ENCODE measurements at regions of chr7 and their contacts with region 1.

Region 1: DNA sequence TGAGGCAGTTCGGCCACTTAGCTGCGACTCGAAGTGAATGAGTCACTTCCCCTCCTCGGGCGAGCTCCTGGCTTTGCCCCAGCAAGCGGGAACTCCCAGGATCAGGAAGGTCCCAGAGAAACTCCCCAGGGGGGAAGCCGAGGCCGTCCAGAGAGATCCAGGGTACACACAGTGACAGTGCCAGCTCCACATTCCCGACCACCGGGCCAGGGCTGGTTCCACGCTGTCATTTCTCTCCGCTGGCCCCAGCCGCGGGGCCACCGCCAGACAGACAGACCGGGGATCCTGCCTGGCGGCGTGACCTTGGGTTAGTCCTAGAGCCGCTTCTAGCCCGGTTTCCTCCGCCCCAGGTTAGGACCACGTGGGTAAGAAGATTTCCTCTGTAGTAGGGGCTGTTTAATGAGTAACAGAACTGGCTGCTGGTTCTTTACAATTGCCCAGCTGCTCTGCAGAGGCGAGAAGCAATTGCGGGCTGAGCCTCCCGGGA is 463 bp upstream of the UPP1 start:
- DNase-seq: no peak
- ATAC-seq: peak; percentile 73
- H3K4me3 Mint-ChIP-seq: peak overlapping the region; percentile 81
- H3K27ac Mint-ChIP-seq: peak overlapping the region; percentile 96
- H3K4me1 Mint-ChIP-seq: peaks cover 67% of the 10 kb centered on the region
- H3K27me3 Mint-ChIP-seq: no peaks in the 10 kb centered on the region

Region 2: DNA sequence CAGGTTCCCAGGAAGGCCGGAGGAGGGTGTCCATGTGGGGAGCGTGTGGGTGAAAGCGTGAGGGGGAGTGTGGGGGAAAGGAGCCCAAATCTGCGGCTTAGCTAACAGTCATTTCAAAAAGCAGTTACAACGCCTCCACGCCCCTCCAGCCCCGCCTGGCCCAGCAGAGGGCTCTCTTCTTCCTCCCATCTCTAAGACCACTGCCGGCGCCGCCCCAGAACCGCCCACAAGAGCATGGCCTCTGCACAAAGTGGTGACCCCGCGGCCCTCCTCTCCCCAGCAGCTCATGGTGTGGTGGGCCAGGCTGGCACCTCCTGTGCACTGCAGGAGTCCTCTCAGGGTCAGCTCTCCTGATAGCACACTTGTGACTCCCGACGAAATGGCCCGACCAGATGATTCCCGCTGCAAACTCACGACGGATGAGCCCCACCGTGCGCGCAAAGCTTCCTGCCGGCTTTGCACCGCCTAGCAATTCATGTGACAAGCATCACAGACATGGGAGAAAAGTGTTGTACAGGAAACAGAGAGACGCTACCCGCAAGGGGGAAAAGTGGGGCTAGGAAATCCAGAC is 96.8 kb before region 1 on chr7:
- CTCF ChIA-PET with region 1: interaction called, 3 read pairs
- POLR2A ChIA-PET with region 1: no interaction called
- intact Hi-C with region 1: loop called (anchors 1 to 2 kb)
- DNase-seq: peak; percentile 93
- ATAC-seq: peak; percentile 97
- H3K4me3 Mint-ChIP-seq: peak overlapping the region; percentile 77
- H3K27ac Mint-ChIP-seq: peak overlapping the region; percentile 91
- H3K4me1 Mint-ChIP-seq: peaks cover 21% of the 10 kb centered on the region
- H3K27me3 Mint-ChIP-seq: no peaks in the 10 kb centered on the region

Region 3: DNA sequence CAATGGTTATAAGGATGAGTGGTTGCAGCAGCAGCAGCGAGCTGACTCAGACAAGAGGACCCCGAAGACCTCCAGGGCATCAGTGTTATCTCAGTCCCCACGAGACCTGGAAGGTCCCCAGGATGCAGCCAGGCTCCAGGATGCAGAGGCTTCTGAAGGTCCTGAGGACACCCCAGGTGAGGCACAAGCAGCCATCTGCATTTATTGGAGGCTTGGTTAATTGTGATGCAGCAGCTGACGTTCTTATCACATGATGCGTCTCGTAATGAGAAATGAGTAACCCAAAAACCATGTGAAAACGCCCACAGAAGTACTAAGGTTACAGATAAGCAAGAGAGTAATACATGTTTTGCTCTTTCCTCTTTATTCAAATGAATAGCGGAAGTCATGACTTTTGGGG is 35.9 kb before region 1 on chr7:
- CTCF ChIA-PET with region 1: interaction called, 4 read pairs
- POLR2A ChIA-PET with region 1: no interaction called
- intact Hi-C with region 1: loop called in 1 of 2 experiments (anchors 1 kb)
- DNase-seq: peak; percentile 46
- ATAC-seq: peak; percentile 87
- H3K4me3 Mint-ChIP-seq: no peak overlapping the region
- H3K27ac Mint-ChIP-seq: no peak overlapping the region
- H3K4me1 Mint-ChIP-seq: peaks cover 10% of the 10 kb centered on the region
- H3K27me3 Mint-ChIP-seq: no peaks in the 10 kb centered on the region

Region 4: GRCh38 chr7:48130658-48131108 is 42.1 kb after region 1 on chr7:
- CTCF ChIA-PET with region 1: no interaction called
- POLR2A ChIA-PET with region 1: no interaction called
- intact Hi-C with region 1: loop called in 1 of 2 experiments (anchors 1 kb)
- DNase-seq: no peak
- ATAC-seq: peak; percentile 93
- H3K4me3 Mint-ChIP-seq: no peak overlapping the region
- H3K27ac Mint-ChIP-seq: no peak overlapping the region
- H3K4me1 Mint-ChIP-seq: peaks cover 6% of the 10 kb centered on the region
- H3K27me3 Mint-ChIP-seq: peaks cover 14% of the 10 kb centered on the region